ENCODE measurements at regions of chr3 and their contacts with region 1.

Region 1: GRCh38 chr3:43024181-43024885 is 45.2 kb downstream of the GASK1A start:
- DNase-seq: peak in 7 of 9 experiments; percentile 39 to 82 (median 72)
- ATAC-seq: peak; percentile 91
- H3K4me3 ChIP-seq: peak overlapping the region; percentile 0 to 20
- H3K4me3 Mint-ChIP-seq: peak overlapping the region; percentile 74
- H3K27ac ChIP-seq: peak overlapping the region; percentile 25 to 56
- H3K27ac Mint-ChIP-seq: peak overlapping the region; percentile 95
- H3K4me1 ChIP-seq: peaks cover 69% of the 10 kb centered on the region
- H3K4me1 Mint-ChIP-seq: peaks cover 79% of the 10 kb centered on the region
- H3K27me3 ChIP-seq: no peaks in the 10 kb centered on the region
- H3K27me3 Mint-ChIP-seq: no peaks in the 10 kb centered on the region
- CTCF ChIP-seq: no peak

Region 2: GRCh38 chr3:43071313-43071893 is 47.1 kb after region 1 on chr3:
- CTCF ChIA-PET with region 1: interaction called, 10 read pairs
- POLR2A ChIA-PET with region 1: no interaction called
- intact Hi-C with region 1: no loop called
- DNase-seq: peak in 4 of 9 experiments; percentile 36 to 59 (median 53)
- ATAC-seq: no peak
- H3K4me3 ChIP-seq: no peak overlapping the region
- H3K4me3 Mint-ChIP-seq: no peak overlapping the region
- H3K27ac ChIP-seq: no peak overlapping the region
- H3K27ac Mint-ChIP-seq: no peak overlapping the region
- H3K4me1 ChIP-seq: no peaks in the 10 kb centered on the region
- H3K4me1 Mint-ChIP-seq: no peaks in the 10 kb centered on the region
- H3K27me3 ChIP-seq: no peaks in the 10 kb centered on the region
- H3K27me3 Mint-ChIP-seq: no peaks in the 10 kb centered on the region
- CTCF ChIP-seq: peak; percentile 60

Region 3: DNA sequence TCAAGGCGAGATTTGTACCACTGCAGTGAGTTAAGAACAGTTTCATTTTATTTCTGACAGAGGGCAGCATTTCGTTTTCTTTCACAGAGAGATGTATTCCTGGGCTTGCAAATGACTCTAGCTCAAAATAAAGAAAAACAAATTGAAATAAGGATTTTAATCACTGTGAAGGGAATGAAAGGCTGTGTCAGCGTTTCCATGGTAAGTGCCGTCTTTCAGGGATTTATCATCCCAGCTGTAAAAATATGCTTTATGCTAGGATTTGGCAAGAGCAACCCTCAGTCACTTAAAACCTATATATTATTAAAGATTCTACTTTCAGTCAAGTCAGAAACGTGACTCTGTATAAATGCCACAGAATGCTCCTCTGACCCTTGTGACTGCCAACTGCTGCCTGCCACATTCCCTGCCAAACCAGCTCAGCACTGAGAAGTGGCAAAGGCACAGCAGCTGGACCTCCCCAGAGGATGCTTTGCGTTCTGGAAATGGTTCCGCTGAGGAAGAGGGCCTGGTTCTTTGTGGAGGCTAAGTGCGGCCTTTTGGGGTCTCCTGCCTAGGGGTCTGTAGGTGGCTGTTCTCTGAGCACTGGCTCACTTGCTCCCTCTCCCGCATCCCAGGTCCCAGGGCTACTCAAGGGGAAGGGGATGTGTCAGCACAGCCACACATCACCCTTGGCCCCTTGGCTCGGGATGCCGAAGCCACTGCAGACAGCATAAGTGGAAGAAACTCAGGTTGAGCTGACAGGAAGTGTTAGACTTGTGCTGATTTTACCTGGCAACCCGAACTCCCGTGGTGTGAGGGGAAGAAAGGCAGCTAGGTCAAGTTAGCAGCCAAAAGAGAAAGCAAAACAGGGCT is 138.1 kb after region 1 on chr3:
- CTCF ChIA-PET with region 1: no interaction called
- POLR2A ChIA-PET with region 1: no interaction called
- intact Hi-C with region 1: no loop called
- DNase-seq: peak; percentile 26 to 84 (median 62)
- ATAC-seq: peak; percentile 94
- H3K4me3 ChIP-seq: peak overlapping the region; percentile 18 to 30
- H3K4me3 Mint-ChIP-seq: peak overlapping the region; percentile 82
- H3K27ac ChIP-seq: peak overlapping the region; percentile 64 to 79
- H3K27ac Mint-ChIP-seq: peak overlapping the region; percentile 100
- H3K4me1 ChIP-seq: peaks cover 26% of the 10 kb centered on the region
- H3K4me1 Mint-ChIP-seq: peaks cover 28% of the 10 kb centered on the region
- H3K27me3 ChIP-seq: no peaks in the 10 kb centered on the region
- H3K27me3 Mint-ChIP-seq: no peaks in the 10 kb centered on the region
- CTCF ChIP-seq: peak; percentile 67

Region 4: GRCh38 chr3:43389388-43390254 is 365.3 kb after region 1 on chr3:
- CTCF ChIA-PET with region 1: no interaction called
- POLR2A ChIA-PET with region 1: no interaction called
- intact Hi-C with region 1: loop called in 1 of 2 experiments (anchors 5 kb)
- DNase-seq: peak; percentile 40 to 93 (median 74)
- ATAC-seq: peak; percentile 89
- H3K4me3 ChIP-seq: peak overlapping the region in 1 of 2 experiments; percentile 21
- H3K4me3 Mint-ChIP-seq: peak overlapping the region; percentile 50
- H3K27ac ChIP-seq: peak overlapping the region; percentile 45 to 85
- H3K27ac Mint-ChIP-seq: peak overlapping the region; percentile 92
- H3K4me1 ChIP-seq: peaks cover 32% of the 10 kb centered on the region
- H3K4me1 Mint-ChIP-seq: peaks cover 80% of the 10 kb centered on the region
- H3K27me3 ChIP-seq: no peaks in the 10 kb centered on the region
- H3K27me3 Mint-ChIP-seq: no peaks in the 10 kb centered on the region
- CTCF ChIP-seq: no peak

Measured in CD8-positive, alpha-beta T cell (primary cell).